Heart right ventricle (tissue), 16 donors: ENCODE measurements at regions of chr1 and their contacts with region 1.

Region 1: DNA sequence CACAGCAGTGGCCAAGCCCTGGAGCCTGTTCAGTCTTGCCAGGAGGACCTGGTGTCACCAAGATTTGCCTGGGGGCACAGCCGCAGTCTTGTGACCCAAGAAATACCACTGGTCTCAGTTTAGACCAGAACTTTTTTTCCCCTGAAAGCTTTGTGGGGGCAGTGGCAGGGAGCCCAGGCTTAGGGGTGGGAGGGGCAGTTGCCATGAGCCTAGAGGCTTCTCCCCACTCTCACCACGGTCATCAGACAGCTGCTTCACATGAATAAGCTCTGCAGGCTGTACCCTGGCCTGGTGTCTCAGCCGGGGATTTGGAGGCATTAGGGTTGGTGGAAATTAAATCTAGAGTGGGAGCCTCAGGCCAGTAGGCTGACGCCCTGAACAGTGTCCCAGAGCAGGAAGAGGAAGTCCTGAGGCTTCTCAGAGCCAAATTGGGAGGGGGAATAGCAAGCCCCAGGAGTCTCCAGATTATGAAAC is 73.7 kb downstream of the SLC16A1 start:
- DNase-seq: no peak
- ATAC-seq: peak; percentile 6 to 85 (median 46)
- H3K4me3 ChIP-seq: no peak overlapping the region
- H3K27ac ChIP-seq: peak overlapping the region in 8 of 10 donors; percentile 10 to 76 (median 65)
- H3K4me1 ChIP-seq: peaks cover 0 to 23% (median 17%) of the 10 kb centered on the region in 9 donors
- H3K27me3 ChIP-seq: no peaks in the 10 kb centered on the region
- CTCF ChIP-seq: no peak

Region 2: GRCh38 chr1:112715264-112716053 is 166.8 kb before region 1 on chr1 and contains the start of gene PPM1J:
- intact Hi-C with region 1: loop called in 2 of 10 experiments (anchors 5 kb)
- DNase-seq: peak; percentile 98 to 99
- ATAC-seq: peak; percentile 87 to 96 (median 91)
- H3K4me3 ChIP-seq: peak within 1 kb of the TSS; percentile 55 to 81 (median 71)
- H3K27ac ChIP-seq: peak within 1 kb of the TSS in 9 of 10 donors; percentile 67 to 88 (median 78)
- H3K4me1 ChIP-seq: peaks cover 2 to 35% (median 23%) of the 10 kb centered on the region in 9 donors
- H3K27me3 ChIP-seq: peaks cover 0 to 30% (median 12%) of the 10 kb centered on the region in 7 donors
- CTCF ChIP-seq: peak in 1 of 9 donors; percentile 2
- total RNA-seq, gene PPM1J: 5.8 to 11.0 (median 8.5) TPM

Region 3: DNA sequence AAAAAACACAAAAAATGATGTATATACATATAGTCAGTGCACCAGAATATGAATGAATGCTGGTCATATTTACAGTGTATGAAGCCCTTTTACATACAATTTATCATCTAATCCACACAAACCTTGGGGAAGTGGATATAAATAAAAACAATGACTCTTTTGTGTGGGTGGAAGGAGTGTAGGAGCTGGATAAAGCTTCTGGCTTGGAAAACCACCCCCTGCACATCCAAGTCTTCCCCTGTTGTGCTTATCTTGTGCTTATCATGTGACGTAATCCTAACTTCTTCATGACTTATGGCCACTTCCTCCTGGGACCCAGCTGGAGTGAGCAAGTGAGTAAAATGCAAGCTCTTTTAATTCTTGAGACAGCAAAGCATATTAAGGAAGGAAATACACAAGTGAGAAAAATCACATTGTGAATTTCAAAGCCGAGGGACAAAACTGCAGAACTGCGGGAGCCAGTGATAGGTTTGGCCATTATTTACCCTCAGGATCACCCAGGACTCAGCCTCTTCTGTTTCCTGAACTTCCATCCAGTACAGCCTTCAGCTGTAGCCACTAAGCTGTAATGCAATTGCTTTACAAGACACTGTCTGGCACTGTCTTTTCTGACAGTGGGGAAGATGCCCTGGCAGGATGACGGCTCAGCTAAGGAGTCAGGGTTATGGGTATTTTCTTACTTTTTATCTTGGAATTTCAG is 63.2 kb before region 1 on chr1:
- intact Hi-C with region 1: loop called in 1 of 10 experiments (anchors 10 kb)
- DNase-seq: peak in 1 of 2 donors; percentile 14
- ATAC-seq: peak in 7 of 8 donors; percentile 67 to 92 (median 80)
- H3K4me3 ChIP-seq: no peak overlapping the region
- H3K27ac ChIP-seq: peak overlapping the region in 2 of 10 donors; percentile 3 to 42
- H3K4me1 ChIP-seq: peaks cover 0 to 30% (median 9%) of the 10 kb centered on the region in 9 donors
- H3K27me3 ChIP-seq: no peaks in the 10 kb centered on the region
- CTCF ChIP-seq: no peak

Region 4: DNA sequence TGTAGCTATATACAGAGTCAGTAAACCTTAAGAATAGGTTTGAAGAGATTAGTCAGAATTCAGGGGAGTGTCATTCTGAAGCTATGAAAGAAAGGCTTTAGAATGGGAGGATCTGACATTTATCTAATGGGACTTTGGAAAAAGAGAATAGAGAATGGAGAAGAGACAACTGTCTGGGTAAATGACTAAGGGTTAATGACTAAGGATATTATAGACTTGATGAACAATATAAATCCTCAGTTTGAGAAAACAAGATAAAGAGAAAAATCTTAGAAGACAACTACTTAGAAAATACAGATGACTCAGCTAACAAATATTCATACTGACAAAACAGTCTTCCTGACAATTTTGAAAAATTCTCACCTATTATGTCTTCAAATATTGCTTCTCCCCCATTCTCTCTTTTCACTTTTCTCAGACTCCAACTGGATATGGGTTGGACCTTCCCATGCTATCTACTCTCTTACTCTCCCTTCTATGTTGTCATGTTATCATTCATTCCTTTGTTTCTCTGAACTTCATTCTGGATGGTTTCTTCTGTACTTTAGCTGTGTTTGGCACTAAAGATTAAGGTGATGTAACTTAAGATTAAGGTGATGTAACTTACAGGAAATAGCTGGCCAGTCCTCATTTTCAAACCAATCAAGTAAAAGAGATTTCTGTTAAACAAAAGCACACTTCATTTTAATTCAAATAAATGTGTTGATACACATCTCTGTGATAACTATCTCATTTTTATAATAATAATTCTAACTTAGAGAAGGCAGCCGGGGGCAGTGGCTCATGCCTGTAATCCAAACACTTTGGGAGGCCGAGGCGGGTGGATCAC is 53.4 kb after region 1 on chr1:
- intact Hi-C with region 1: loop called in 1 of 10 experiments (anchors 10 kb)
- DNase-seq: no peak
- ATAC-seq: no peak
- H3K4me3 ChIP-seq: no peak overlapping the region
- H3K27ac ChIP-seq: peak overlapping the region in 2 of 10 donors; percentile 5 to 43
- H3K4me1 ChIP-seq: peaks cover 0 to 53% (median 34%) of the 10 kb centered on the region in 9 donors
- H3K27me3 ChIP-seq: no peaks in the 10 kb centered on the region
- CTCF ChIP-seq: no peak

Region 5: DNA sequence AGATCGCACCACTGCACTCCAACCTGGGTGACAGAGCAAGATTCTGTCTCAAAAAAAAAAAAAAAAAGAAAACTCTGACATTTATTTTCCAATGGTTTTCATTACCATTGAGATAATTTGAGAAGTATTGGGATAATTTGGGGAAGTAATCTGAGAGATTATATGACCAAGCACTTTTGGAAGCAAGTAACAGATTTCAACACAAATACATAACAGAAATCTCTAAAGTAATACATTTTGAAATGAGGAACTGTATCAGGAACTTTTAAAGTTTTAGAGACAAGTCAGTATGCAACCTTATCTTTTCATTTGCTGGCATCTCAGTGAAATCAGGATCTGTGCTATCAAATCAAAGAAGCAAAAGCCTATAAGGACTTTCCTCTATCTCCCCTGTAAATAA is 99.1 kb after region 1 on chr1:
- intact Hi-C with region 1: no loop called
- DNase-seq: no peak
- ATAC-seq: no peak
- H3K4me3 ChIP-seq: no peak overlapping the region
- H3K27ac ChIP-seq: peak overlapping the region in 5 of 10 donors; percentile 78 to 90 (median 84)
- H3K4me1 ChIP-seq: peaks cover 2 to 59% (median 24%) of the 10 kb centered on the region in 9 donors
- H3K27me3 ChIP-seq: no peaks in the 10 kb centered on the region
- CTCF ChIP-seq: no peak